ENCODE measurements at regions of chr19 and their contacts with region 1.

Region 1: DNA sequence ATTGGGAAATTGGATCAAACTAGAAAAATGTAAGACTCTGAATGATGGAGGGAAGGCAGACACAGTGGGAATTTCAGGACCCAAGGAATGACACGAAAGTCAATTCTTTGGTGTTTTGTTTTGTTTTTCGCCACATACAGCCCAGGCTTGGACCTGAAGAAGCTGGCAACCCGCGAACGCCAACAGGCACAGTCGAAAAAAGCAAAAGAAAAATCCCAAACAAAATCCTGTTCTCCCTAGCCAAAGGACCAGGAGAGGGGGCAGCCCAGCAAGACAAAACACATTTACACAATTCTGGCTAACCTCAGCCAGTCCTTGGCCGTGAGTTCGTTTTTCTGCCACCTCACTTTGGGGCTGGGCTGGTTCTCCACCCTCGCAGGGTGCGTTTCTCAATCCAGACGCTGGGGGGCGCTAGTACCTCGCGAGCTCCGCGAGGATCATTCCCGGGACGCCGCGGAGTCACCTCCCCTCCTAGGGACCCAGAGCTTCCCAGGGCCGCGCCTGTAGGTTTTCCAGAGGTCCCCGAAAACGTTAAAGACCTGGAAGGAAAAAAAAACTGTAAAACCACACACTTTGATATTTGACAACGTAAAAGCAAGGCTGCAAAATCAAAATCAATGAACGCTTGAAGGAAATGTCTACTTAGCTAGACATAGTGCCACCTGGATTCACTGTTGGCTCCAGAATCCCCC is 34.9 kb upstream of the TPM4 start:
- DNase-seq: peak; percentile 81
- ATAC-seq: peak; percentile 80
- H3K4me3 Mint-ChIP-seq: peak overlapping the region; percentile 38
- H3K27ac Mint-ChIP-seq: peak overlapping the region; percentile 39
- H3K4me1 Mint-ChIP-seq: peaks cover 17% of the 10 kb centered on the region
- H3K27me3 Mint-ChIP-seq: peaks cover 14% of the 10 kb centered on the region

Region 2: DNA sequence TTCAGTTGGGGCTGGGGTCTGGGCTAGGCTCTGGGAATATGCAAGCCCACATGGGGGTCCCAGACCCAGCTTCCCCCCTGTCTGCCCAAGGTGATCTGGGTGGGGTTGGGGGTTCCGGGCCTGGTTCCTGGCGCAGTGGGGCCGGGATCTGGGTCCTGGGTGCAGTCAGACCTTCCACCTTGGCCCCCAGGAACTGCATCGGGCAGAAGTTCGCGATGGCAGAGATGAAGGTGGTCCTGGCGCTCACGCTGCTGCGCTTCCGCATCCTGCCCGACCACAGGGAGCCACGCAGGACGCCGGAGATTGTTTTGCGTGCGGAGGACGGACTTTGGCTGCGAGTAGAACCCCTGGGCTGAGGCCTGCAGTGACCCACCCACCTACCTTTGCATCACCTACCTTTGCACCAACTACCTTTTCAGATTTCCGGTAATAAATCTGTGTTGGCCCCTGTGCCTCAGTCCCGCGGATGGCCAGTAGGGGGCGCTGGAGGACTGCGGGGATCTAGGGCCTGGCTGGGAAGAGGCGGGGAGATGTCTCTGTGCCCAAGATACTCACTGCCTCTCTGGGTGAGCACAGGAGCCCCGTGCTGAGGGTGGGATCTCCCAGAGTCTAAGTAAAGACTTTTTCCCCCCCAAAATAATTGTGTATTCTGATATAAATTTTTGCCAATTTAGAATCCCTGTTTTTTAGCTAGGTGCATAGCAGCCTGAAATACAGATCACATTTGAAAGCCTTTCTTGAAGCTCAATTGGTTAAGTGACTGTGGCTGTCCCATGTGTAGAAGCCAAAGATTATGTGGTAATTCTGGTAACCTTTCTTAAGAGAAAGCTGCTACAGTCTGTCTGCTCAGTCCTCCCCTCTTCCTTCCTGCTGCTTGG is 412.2 kb before region 1 on chr19:
- CTCF ChIA-PET with region 1: interaction called, 14 read pairs
- POLR2A ChIA-PET with region 1: no interaction called
- DNase-seq: peak; percentile 90
- ATAC-seq: peak; percentile 93
- H3K4me3 Mint-ChIP-seq: no peak overlapping the region
- H3K27ac Mint-ChIP-seq: no peak overlapping the region
- H3K4me1 Mint-ChIP-seq: peaks cover 6% of the 10 kb centered on the region
- H3K27me3 Mint-ChIP-seq: peaks cover 7% of the 10 kb centered on the region

Region 3: DNA sequence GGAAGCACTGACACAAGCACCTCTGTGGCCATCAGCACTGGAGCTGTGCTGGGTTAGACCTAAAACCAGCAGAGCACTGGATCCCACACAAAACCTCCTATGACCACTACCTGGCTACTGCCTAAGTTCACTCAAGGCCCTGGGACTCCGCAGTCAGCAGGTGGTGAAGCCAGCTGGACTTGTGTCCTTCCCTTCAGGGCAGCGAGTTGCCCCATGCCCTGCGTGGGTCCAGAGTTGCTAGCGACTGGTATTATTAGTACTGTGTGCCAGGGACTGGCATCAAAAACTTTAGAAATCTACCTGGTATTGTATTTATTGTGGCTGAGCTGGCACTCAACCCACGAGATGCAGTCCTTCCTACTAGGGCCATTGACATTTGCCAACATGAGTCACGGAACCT is 86.6 kb before region 1 on chr19:
- CTCF ChIA-PET with region 1: no interaction called
- POLR2A ChIA-PET with region 1: no interaction called
- DNase-seq: no peak
- ATAC-seq: no peak
- H3K4me3 Mint-ChIP-seq: no peak overlapping the region
- H3K27ac Mint-ChIP-seq: no peak overlapping the region
- H3K4me1 Mint-ChIP-seq: no peaks in the 10 kb centered on the region
- H3K27me3 Mint-ChIP-seq: peaks cover 24% of the 10 kb centered on the region

Region 4: GRCh38 chr19:16062789-16063188 is 21.3 kb after region 1 on chr19:
- CTCF ChIA-PET with region 1: interaction called, 44 read pairs
- POLR2A ChIA-PET with region 1: no interaction called
- DNase-seq: peak; percentile 75
- ATAC-seq: peak; percentile 45
- H3K4me3 Mint-ChIP-seq: no peak overlapping the region
- H3K27ac Mint-ChIP-seq: no peak overlapping the region
- H3K4me1 Mint-ChIP-seq: peaks cover 34% of the 10 kb centered on the region
- H3K27me3 Mint-ChIP-seq: peaks cover 12% of the 10 kb centered on the region

Region 5: GRCh38 chr19:16088351-16089009 is 47.0 kb after region 1 on chr19:
- CTCF ChIA-PET with region 1: interaction called, 40 read pairs
- POLR2A ChIA-PET with region 1: no interaction called
- DNase-seq: no peak
- ATAC-seq: no peak
- H3K4me3 Mint-ChIP-seq: no peak overlapping the region
- H3K27ac Mint-ChIP-seq: peak overlapping the region; percentile 37
- H3K4me1 Mint-ChIP-seq: peaks cover 66% of the 10 kb centered on the region
- H3K27me3 Mint-ChIP-seq: no peaks in the 10 kb centered on the region

Region 6: GRCh38 chr19:16111160-16111908 is 69.9 kb after region 1 on chr19 and contains the start of gene RAB8A:
- CTCF ChIA-PET with region 1: interaction called, 20 read pairs
- POLR2A ChIA-PET with region 1: interaction called, 5 read pairs
- DNase-seq: peak; percentile 98
- ATAC-seq: peak; percentile 96
- H3K4me3 Mint-ChIP-seq: peak within 1 kb of the TSS; percentile 98
- H3K27ac Mint-ChIP-seq: peak within 1 kb of the TSS; percentile 99
- H3K4me1 Mint-ChIP-seq: peaks cover 39% of the 10 kb centered on the region
- H3K27me3 Mint-ChIP-seq: no peaks in the 10 kb centered on the region
- total RNA-seq, gene RAB8A: 156 to 167 TPM

Region 7: DNA sequence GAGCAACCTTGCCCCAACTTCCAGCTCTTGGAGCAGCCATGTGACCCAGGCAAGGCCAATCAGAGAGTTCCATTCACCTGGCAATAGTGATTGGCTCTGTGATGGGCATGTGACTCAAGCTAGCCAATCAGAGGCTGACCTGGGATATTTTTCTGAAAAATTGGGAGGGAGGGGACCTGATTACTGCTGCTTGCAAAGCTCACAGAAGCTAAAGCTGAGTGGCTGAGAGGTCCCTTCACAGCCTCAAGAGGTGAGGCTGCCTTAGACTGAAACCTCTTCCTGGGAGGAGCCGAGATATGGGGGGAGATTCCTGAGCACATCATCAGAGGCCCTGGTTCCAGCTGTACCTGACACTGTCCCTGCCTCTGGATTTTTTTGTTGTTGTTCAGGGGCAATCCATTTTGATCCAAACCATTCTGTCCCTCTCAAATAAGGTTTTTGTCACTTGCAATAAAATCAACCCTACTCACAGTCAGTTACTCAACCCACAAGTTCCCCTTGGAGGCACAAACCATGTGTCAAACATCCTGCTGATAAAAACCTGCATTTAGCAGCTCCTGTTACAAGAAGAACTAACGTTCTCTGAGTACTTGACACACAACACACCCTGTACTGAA is 127.1 kb after region 1 on chr19:
- CTCF ChIA-PET with region 1: interaction called, 13 read pairs
- POLR2A ChIA-PET with region 1: no interaction called
- DNase-seq: no peak
- ATAC-seq: peak; percentile 49
- H3K4me3 Mint-ChIP-seq: no peak overlapping the region
- H3K27ac Mint-ChIP-seq: peak overlapping the region; percentile 72
- H3K4me1 Mint-ChIP-seq: peaks cover 17% of the 10 kb centered on the region
- H3K27me3 Mint-ChIP-seq: no peaks in the 10 kb centered on the region

Measured in activated CD8-positive, alpha-beta T cell treated with anti-CD3 and anti-CD28 coated beads, Interleukin-2, amount 10 ng/mL, durations not matched to agents 7 days and 5 days (primary cell).